HepG2 (cell line): ENCODE measurements at regions of chr9 and their contacts with region 1.

Region 1: DNA sequence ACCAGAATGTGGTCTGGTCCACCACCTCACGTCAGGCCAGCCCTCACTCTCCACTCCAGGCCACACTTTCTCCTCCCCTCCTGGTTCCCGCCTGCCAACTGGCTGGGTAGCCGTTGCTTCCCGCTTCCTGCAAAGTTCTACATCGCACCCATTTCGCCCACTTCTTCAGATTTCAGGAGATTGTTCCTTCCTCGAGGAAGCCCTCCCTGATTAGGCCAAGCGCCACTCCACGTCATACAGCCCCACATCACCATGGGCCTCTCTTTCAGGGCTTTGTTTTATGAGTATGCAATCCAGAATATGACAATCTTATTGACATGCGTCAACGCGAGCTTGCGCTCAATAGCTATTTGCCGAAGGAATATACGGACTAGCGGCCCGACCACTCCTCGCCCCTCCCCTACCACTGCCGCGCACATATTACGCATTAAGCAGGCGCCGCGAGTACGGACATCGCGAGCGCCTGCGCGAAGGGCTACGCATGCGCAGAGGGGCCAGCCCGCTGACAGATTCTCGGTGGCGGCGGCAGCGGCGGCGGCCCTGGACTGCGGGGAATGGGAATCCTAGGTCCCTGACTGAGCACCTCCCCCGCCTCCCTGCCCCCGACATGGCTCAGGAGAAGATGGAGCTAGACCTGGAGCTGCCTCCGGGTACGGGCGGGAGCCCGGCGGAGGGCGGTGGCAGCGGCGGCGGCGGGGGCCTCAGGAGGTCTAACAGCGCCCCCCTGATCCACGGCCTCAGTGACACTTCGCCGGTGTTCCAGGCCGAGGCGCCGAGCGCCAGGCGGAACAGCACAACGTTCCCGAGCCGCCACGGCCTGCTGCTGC is 74.7 kb downstream of the PIP5K1B start:
- DNase-seq: peak; percentile 89
- ATAC-seq: peak; percentile 93
- H3K4me3 ChIP-seq: peak overlapping the region; percentile 75 to 95 (median 78)
- H3K27ac ChIP-seq: peak overlapping the region; percentile 95
- H3K4me1 ChIP-seq: peaks cover 53% of the 10 kb centered on the region
- H3K27me3 ChIP-seq: no peaks in the 10 kb centered on the region; a peak in 1 of 5 replicates
- CTCF ChIP-seq: peak; percentile 92
- EP300 ChIP-seq: 0 out of 4 replicates have a peak, but pooled peaks of 1 of the 2 experiments have one; percentile 1
- POLR2A ChIP-seq: peak; percentile 80 to 82
- RAD21 ChIP-seq: peak; percentile 83

Region 2: DNA sequence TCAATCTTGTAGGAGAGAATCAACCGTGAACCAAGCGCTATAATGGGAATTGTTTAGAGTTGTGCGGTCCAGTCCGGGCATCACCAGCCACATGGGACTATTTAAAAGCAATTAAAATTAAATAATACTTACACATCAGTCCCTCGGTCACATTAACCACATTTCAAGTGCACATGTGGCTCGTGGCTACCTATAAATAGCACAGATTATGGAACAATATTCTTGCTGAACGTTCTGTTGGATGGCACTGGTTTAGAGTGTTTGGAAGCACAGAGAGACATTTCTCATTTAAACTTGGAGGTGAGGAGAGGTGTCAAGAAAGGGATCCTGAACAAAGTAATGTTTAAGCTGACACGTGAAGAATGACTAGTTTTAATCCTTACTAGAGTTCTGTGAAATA is 87.3 kb before region 1 on chr9:
- CTCF ChIA-PET with region 1: no interaction called
- POLR2A ChIA-PET with region 1: no interaction called
- in situ Hi-C with region 1: no loop called
- intact Hi-C with region 1: no loop called
- DNase-seq: no peak
- ATAC-seq: no peak
- H3K4me3 ChIP-seq: no peak overlapping the region
- H3K27ac ChIP-seq: no peak overlapping the region
- H3K4me1 ChIP-seq: peaks cover 8% of the 10 kb centered on the region
- H3K27me3 ChIP-seq: peaks cover 0 to 11% of the 10 kb centered on the region in 2 experiments; a peak in 2 of 5 replicates
- CTCF ChIP-seq: no peak
- EP300 ChIP-seq: no peak
- POLR2A ChIP-seq: no peak
- RAD21 ChIP-seq: no peak

Region 3: GRCh38 chr9:68731857-68732256 is 47.9 kb before region 1 on chr9:
- CTCF ChIA-PET with region 1: no interaction called
- POLR2A ChIA-PET with region 1: interaction called, 11 read pairs
- in situ Hi-C with region 1: no loop called
- intact Hi-C with region 1: no loop called
- DNase-seq: no peak
- ATAC-seq: peak; percentile 26
- H3K4me3 ChIP-seq: peak overlapping the region; percentile 17 to 45 (median 27); a peak in 4 of 6 replicates
- H3K27ac ChIP-seq: peak overlapping the region; percentile 70
- H3K4me1 ChIP-seq: peaks cover 77% of the 10 kb centered on the region
- H3K27me3 ChIP-seq: no peaks in the 10 kb centered on the region
- CTCF ChIP-seq: no peak
- EP300 ChIP-seq: no peak
- POLR2A ChIP-seq: no peak
- RAD21 ChIP-seq: no peak

Region 4: GRCh38 chr9:68739621-68740174 is 40.1 kb before region 1 on chr9:
- CTCF ChIA-PET with region 1: no interaction called
- POLR2A ChIA-PET with region 1: interaction called, 20 read pairs
- in situ Hi-C with region 1: no loop called
- intact Hi-C with region 1: no loop called
- DNase-seq: peak; percentile 94
- ATAC-seq: peak; percentile 97
- H3K4me3 ChIP-seq: peak overlapping the region in 2 of 3 experiments; percentile 39 to 48; a peak in 4 of 6 replicates
- H3K27ac ChIP-seq: peak overlapping the region; percentile 81
- H3K4me1 ChIP-seq: peaks cover 75% of the 10 kb centered on the region
- H3K27me3 ChIP-seq: no peaks in the 10 kb centered on the region
- CTCF ChIP-seq: no peak
- EP300 ChIP-seq: peak in 1 of 2 experiments; percentile 84; a peak in 2 of 4 replicates
- POLR2A ChIP-seq: no peak
- RAD21 ChIP-seq: no peak

Region 5: DNA sequence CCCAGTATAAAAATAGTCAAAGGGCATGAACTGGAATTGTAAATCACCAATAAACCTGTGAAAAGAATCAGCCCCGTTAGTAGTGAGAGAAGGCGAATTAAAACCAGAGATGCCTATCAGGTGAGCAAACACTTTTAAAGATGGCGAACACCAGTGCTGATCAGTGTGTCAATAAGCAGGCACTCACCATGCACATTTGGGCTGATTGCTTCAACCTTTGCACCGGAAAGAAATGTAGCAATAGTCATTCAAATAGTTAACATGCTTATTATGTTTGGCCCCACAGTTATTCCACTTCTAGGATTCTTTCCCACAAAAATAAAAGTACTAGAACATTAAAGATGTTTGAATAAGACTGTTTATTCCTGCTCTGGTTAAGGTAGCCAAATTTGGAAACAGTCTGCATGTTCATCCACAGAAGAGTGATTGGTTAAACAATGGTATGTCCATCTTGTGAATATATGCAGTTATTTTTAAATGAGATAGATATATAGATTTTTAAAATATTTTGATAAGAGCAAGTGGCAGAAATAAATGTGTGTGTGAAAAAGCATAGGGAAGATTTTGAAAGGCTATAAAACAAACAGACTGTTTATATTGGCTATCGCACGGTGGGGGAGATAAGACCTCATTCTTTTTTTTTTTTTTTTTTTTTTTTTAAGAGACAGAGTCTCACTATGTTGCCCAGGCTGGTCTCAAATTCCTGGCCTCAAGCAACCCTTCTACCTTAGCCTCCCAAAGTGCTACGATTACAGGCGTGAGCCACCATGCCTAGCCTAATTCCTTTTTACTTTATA is 37.5 kb after region 1 on chr9:
- CTCF ChIA-PET with region 1: no interaction called
- POLR2A ChIA-PET with region 1: interaction called, 8 read pairs
- in situ Hi-C with region 1: no loop called
- intact Hi-C with region 1: loop called (anchors 5 kb)
- DNase-seq: peak; percentile 87
- ATAC-seq: peak; percentile 96
- H3K4me3 ChIP-seq: no peak overlapping the region
- H3K27ac ChIP-seq: peak overlapping the region; percentile 57
- H3K4me1 ChIP-seq: peaks cover 23% of the 10 kb centered on the region
- H3K27me3 ChIP-seq: no peaks in the 10 kb centered on the region; a peak in 1 of 5 replicates
- CTCF ChIP-seq: no peak
- EP300 ChIP-seq: peak in 1 of 2 experiments; percentile 87; a peak in 2 of 4 replicates
- POLR2A ChIP-seq: no peak
- RAD21 ChIP-seq: no peak

Region 6: GRCh38 chr9:68832853-68833518 is 53.2 kb after region 1 on chr9:
- CTCF ChIA-PET with region 1: no interaction called
- POLR2A ChIA-PET with region 1: no interaction called
- in situ Hi-C with region 1: no loop called
- intact Hi-C with region 1: no loop called
- DNase-seq: no peak
- ATAC-seq: no peak
- H3K4me3 ChIP-seq: no peak overlapping the region
- H3K27ac ChIP-seq: no peak overlapping the region
- H3K4me1 ChIP-seq: peaks cover 19% of the 10 kb centered on the region
- H3K27me3 ChIP-seq: no peaks in the 10 kb centered on the region
- CTCF ChIP-seq: no peak
- EP300 ChIP-seq: no peak
- POLR2A ChIP-seq: no peak
- RAD21 ChIP-seq: no peak

Region 7: GRCh38 chr9:68844631-68845612 is 65.2 kb after region 1 on chr9:
- CTCF ChIA-PET with region 1: no interaction called
- POLR2A ChIA-PET with region 1: no interaction called
- in situ Hi-C with region 1: no loop called
- intact Hi-C with region 1: loop called (anchors 2 kb)
- DNase-seq: peak; percentile 25
- ATAC-seq: peak; percentile 78
- H3K4me3 ChIP-seq: no peak overlapping the region
- H3K27ac ChIP-seq: no peak overlapping the region
- H3K4me1 ChIP-seq: no peaks in the 10 kb centered on the region
- H3K27me3 ChIP-seq: no peaks in the 10 kb centered on the region
- CTCF ChIP-seq: peak; percentile 55
- EP300 ChIP-seq: no peak
- POLR2A ChIP-seq: no peak
- RAD21 ChIP-seq: no peak

Region 8: GRCh38 chr9:68966496-68966944 is 186.7 kb after region 1 on chr9:
- CTCF ChIA-PET with region 1: no interaction called
- POLR2A ChIA-PET with region 1: no interaction called
- in situ Hi-C with region 1: loop called (anchors 10 kb)
- intact Hi-C with region 1: no loop called
- DNase-seq: no peak
- ATAC-seq: no peak
- H3K4me3 ChIP-seq: no peak overlapping the region
- H3K27ac ChIP-seq: no peak overlapping the region
- H3K4me1 ChIP-seq: peaks cover 64% of the 10 kb centered on the region
- H3K27me3 ChIP-seq: no peaks in the 10 kb centered on the region
- CTCF ChIP-seq: no peak
- EP300 ChIP-seq: no peak
- POLR2A ChIP-seq: no peak
- RAD21 ChIP-seq: no peak